ENCODE measurements at regions of chr11 and their contacts with region 1.

Region 1: GRCh38 chr11:129279326-129280026 is 87.4 kb upstream of the ARHGAP32 start:
- DNase-seq: peak; percentile 54 to 86
- H3K4me3 ChIP-seq: peak overlapping the region; percentile 70
- H3K27ac ChIP-seq: no peak overlapping the region
- H3K4me1 ChIP-seq: peaks cover 50% of the 10 kb centered on the region
- H3K27me3 ChIP-seq: no peaks in the 10 kb centered on the region
- CTCF ChIP-seq: no peak

Region 2: DNA sequence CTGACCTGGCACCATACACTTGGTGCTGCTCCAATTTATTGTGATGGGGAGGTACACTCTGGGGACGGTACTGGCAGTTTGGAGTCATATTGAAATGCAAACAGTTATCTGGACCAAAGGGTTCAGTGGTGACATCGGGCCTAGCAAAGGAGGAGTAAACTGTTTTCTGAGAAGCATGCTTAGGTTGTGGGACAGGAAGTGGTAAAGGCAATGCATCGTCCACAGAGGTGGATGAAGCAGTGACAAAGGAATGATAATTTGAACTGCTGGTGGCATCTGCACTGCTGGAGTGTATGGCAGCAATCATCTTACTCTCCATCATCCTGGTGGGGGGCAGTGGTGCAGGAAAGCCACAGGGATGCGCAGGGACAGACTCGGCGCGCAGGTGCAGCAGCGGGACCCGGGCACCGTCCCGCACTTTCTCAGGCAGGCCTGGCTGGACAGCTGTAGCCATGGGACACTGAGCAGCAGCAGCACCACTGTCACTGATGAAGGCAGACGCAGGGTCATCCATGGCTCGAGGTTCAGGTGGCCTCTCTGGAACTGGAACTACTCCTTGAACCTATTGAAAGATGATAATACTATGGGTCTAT is 308.8 kb before region 1 on chr11:
- CTCF ChIA-PET with region 1: no interaction called
- POLR2A ChIA-PET with region 1: no interaction called
- intact Hi-C with region 1: no loop called
- DNase-seq: no peak
- H3K4me3 ChIP-seq: no peak overlapping the region
- H3K27ac ChIP-seq: no peak overlapping the region
- H3K4me1 ChIP-seq: no peaks in the 10 kb centered on the region
- H3K27me3 ChIP-seq: no peaks in the 10 kb centered on the region
- CTCF ChIP-seq: no peak

Region 3: DNA sequence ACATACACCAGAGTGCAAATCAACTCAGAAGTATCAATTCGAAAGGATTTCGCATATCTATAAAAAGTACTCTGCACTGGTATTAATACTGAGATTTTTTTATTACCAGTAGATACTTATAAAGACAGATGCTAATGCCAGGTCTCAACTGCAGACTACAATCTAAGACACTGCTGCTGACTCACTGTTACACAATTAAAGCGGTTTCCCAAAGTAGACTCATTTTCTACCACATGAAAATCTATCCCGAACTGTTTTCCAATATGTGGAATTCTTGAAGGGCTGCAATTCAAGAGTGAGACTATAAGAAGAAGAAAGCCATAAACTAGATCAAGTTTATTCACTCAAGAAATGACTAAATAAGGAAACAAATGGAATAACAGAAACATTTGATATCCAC is 30.1 kb before region 1 on chr11:
- CTCF ChIA-PET with region 1: no interaction called
- POLR2A ChIA-PET with region 1: no interaction called
- intact Hi-C with region 1: loop called (anchors 1 kb)
- DNase-seq: no peak
- H3K4me3 ChIP-seq: no peak overlapping the region
- H3K27ac ChIP-seq: no peak overlapping the region
- H3K4me1 ChIP-seq: 0 out of 2 replicates have a peak, but pooled peaks cover 6% of the 10 kb centered on the region
- H3K27me3 ChIP-seq: no peaks in the 10 kb centered on the region
- CTCF ChIP-seq: no peak

Region 4: GRCh38 chr11:129315781-129316481 is 36.5 kb after region 1 on chr11:
- CTCF ChIA-PET with region 1: interaction called, 8 read pairs
- POLR2A ChIA-PET with region 1: no interaction called
- intact Hi-C with region 1: loop called (anchors 5 kb)
- DNase-seq: peak; percentile 75 to 90
- H3K4me3 ChIP-seq: peak overlapping the region; percentile 3; the same call in 1 of the 2 replicates
- H3K27ac ChIP-seq: peak overlapping the region; percentile 66
- H3K4me1 ChIP-seq: peaks cover 62% of the 10 kb centered on the region
- H3K27me3 ChIP-seq: no peaks in the 10 kb centered on the region
- CTCF ChIP-seq: no peak

Region 5: DNA sequence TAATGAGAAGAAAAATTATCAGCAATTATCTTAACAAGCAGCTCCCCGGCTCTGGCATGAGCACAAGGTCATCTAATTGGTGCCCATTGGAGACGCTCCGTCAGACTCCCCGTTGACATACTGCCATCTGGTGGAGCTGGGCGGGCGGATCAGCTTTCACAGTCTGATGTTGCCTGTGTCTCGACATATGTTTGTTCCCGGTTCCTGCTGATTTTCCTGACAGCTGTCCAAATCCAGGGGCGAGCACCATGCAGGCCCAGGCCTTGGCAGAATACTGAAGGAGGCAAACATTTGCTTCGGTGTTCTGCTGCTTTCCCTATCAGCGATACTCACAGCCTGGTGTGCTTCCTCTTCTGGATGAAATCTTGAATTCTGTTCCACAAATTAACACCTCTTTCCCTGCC is 52.4 kb after region 1 on chr11:
- CTCF ChIA-PET with region 1: no interaction called
- POLR2A ChIA-PET with region 1: no interaction called
- intact Hi-C with region 1: loop called (anchors 1 kb)
- DNase-seq: peak; percentile 71 to 79
- H3K4me3 ChIP-seq: no peak overlapping the region
- H3K27ac ChIP-seq: no peak overlapping the region
- H3K4me1 ChIP-seq: 0 out of 2 replicates have a peak, but pooled peaks cover 3% of the 10 kb centered on the region
- H3K27me3 ChIP-seq: no peaks in the 10 kb centered on the region
- CTCF ChIP-seq: peak; percentile 88

Region 6: GRCh38 chr11:130653838-130654636 is 1374.6 kb after region 1 on chr11:
- CTCF ChIA-PET with region 1: no interaction called
- POLR2A ChIA-PET with region 1: no interaction called
- intact Hi-C with region 1: no loop called
- DNase-seq: peak in 1 of 2 experiments; percentile 59
- H3K4me3 ChIP-seq: no peak overlapping the region
- H3K27ac ChIP-seq: no peak overlapping the region
- H3K4me1 ChIP-seq: no peaks in the 10 kb centered on the region; the same call in 1 of the 2 replicates
- H3K27me3 ChIP-seq: no peaks in the 10 kb centered on the region
- CTCF ChIP-seq: no peak

Measured in PC-9 (cell line).